Psoas muscle (tissue), 8 donors: ENCODE measurements at regions of chr1 and their contacts with region 1.

Region 1: DNA sequence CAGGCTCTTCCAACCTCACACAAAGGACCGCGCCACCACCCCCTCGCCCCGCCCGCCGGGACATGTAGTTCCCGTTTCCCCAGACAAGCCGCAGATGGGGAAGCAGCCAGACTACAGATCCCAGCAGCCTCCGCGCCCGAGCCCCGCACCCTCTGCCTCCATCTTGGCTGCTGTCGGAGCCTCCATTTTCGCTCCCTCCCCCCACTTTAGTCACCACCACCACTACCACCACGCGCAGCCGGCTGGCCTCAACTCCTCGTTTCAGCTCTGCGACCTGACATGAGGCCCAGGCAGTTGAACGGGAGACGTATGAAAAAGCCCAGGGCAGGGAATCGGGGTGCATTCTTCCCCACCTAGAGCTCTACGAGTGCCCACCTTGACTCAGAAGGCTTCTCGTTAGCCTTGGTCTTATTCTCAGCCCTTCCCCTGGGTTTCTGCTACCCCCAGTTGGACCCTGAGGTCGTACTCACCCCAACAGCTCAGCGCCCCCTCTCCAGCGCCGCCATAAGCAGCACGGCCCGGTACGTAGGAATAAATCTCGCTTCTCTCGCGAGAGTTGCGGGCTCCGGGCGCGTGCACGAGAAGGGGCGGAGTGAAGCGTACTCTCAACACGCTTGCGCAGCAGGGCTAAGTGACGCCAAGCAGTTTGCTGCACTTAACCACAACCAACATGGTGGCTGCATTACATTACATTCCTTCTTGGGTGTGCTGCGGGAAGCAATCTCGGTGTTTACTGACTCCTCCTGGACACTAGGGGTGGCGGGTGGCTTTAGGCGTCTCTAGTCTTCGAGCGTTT is at the start of gene CSDE1:
- DNase-seq: peak; percentile 96 to 99
- ATAC-seq: peak; percentile 85 to 95 (median 91)
- H3K4me3 ChIP-seq: peak within 1 kb of the TSS; percentile 84
- H3K27ac ChIP-seq: peak within 1 kb of the TSS; percentile 100
- H3K4me1 ChIP-seq: peaks cover 25% of the 10 kb centered on the region
- H3K27me3 ChIP-seq: no peaks in the 10 kb centered on the region
- CTCF ChIP-seq: peak; percentile 55
- total RNA-seq, gene CSDE1: 1,331 to 1,888 (median 1,427) TPM

Region 2: DNA sequence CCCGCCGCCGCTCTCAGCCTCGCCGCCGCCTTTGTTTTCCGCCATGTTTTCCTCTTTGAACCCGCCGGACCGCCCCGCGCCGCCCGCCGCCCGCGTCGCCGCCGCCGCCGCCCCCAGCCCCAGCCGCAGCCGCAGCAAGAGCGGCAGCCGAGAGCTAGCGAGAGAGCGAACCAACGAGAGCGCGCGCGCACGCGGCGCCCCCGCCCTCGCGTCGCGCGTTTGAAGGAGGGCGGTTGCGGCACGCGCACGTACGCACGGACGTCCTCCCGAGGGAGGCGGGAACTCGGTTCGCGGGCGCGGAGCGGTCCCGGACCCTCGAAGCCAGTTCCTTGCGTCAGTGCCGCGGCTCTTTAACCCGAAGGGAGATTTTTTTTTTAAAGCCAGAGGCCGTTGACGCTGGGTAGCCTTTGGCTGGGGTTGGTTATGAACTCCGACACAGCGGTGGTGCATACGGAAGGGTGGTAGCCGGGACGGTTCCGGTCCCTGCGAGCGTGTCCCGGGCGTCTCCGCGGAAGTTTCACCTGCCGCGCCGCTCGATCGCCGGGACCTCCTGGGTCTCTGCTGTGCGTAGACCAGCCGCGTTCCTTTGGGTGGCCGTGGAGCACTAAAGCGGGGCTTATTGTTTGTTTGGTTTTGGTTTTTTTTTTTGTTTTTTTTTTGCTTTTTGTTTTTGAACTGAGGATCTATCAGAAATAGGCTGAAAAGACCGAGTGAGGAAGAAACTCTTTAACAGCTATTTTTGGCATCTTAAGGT is 246.4 kb before region 1 on chr1 and contains the start of gene TRIM33:
- intact Hi-C with region 1: loop called in 1 of 2 experiments (anchors 5 kb)
- DNase-seq: peak; percentile 94 to 96
- ATAC-seq: peak; percentile 92 to 96 (median 96)
- H3K4me3 ChIP-seq: peak within 1 kb of the TSS; percentile 93
- H3K27ac ChIP-seq: peak within 1 kb of the TSS; percentile 98
- H3K4me1 ChIP-seq: peaks cover 36% of the 10 kb centered on the region
- H3K27me3 ChIP-seq: no peaks in the 10 kb centered on the region
- CTCF ChIP-seq: no peak
- total RNA-seq, gene TRIM33: 15.2 to 22.0 (median 20.6) TPM

Region 3: GRCh38 chr1:114581335-114582287 is 176.0 kb before region 1 on chr1 and contains the start of gene BCAS2:
- intact Hi-C with region 1: loop called in 1 of 2 experiments (anchors 10 kb)
- DNase-seq: peak; percentile 95 to 96
- ATAC-seq: peak; percentile 95 to 98 (median 98)
- H3K4me3 ChIP-seq: peak within 1 kb of the TSS; percentile 75
- H3K27ac ChIP-seq: peak within 1 kb of the TSS; percentile 92
- H3K4me1 ChIP-seq: peaks cover 8% of the 10 kb centered on the region
- H3K27me3 ChIP-seq: no peaks in the 10 kb centered on the region
- CTCF ChIP-seq: no peak
- total RNA-seq, gene BCAS2: 22.0 to 33.6 (median 27.0) TPM

Region 4: DNA sequence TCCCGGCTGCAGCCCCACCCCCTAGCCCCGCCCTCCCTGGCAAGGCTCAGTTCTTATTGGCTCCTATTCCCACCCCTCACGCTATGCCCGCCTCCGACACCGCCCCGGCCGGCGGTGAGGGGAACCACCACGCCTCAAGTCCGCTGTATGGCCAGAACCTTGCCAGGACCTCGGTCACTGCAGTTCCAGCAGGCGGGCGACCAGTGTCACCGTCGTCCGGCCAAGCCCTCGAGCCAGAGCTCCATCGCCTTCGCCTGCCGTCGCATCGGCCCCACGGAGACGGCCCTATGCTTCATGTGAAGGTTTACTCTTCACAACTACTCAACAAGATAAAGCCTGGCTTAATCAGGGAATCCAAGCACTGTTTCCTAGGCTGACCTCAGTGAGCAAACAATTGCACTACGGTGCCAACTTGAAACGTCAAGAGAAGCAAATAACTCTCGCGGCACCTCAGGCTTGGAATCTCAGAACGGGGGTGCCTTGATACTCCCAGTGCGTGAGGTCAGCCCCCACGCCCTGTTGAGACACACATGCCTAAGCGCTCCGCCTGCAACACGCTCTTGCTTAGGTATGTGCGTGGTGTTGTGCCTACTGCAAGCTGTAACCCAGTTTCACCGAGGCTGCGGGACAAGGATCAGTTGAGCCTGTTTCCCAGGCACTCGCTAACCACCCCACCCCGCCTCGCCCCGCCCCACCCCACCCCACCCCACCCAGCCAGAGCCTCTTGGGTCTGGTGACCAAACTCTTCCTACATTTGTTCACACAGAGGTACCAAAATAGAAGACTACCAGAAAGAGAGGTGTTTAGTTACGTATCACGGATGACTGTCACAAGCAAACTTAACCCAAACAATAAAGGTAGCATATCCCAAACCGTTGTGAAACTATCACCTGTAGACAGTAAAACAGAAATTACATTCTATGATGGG is 87.3 kb before region 1 on chr1:
- intact Hi-C with region 1: loop called in 1 of 2 experiments (anchors 5 kb)
- DNase-seq: peak; percentile 95 to 97
- ATAC-seq: peak; percentile 91 to 96 (median 92)
- H3K4me3 ChIP-seq: peak overlapping the region; percentile 81
- H3K27ac ChIP-seq: peak overlapping the region; percentile 91
- H3K4me1 ChIP-seq: peaks cover 20% of the 10 kb centered on the region
- H3K27me3 ChIP-seq: no peaks in the 10 kb centered on the region
- CTCF ChIP-seq: peak; percentile 18

Region 5: DNA sequence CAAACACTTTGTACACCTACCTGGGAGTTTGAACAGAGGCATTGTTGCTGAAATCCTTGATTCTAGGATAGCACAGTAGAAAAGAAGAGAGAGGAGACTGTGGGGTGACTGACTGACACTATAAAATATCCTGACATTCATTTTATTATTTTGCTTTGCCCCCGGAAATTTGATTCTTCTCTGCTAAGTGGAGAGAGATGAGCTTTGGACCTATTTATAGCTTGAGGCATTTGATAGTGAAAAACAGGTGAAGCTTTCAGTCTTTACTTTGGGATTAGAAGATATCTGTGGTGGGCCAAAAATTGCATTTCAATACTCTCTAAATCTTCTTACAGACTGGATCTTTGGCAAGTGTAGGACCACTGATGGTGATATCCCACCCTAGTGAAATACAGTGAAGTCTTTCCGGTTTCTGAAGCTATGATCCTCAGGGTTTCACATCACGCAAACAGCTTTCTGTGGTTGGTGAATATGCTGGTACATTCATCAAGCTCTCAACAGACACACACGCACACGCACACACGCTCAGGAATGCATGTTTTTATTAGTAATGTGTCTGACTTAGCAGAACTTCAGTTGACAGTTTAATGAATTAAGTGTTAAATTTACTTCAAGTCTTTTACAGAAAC is 62.1 kb before region 1 on chr1 and contains the start of gene AMPD1:
- intact Hi-C with region 1: loop called in 1 of 2 experiments (anchors 2 kb)
- DNase-seq: no peak
- ATAC-seq: peak; percentile 71 to 80 (median 74)
- H3K4me3 ChIP-seq: peak within 1 kb of the TSS; percentile 75
- H3K27ac ChIP-seq: peak within 1 kb of the TSS; percentile 94
- H3K4me1 ChIP-seq: peaks cover 20% of the 10 kb centered on the region
- H3K27me3 ChIP-seq: no peaks in the 10 kb centered on the region
- CTCF ChIP-seq: no peak
- total RNA-seq, gene AMPD1: 73.4 to 289 (median 155) TPM

Region 6: GRCh38 chr1:114868766-114869165 is 111.1 kb after region 1 on chr1:
- intact Hi-C with region 1: no loop called
- DNase-seq: no peak
- ATAC-seq: no peak
- H3K4me3 ChIP-seq: no peak overlapping the region
- H3K27ac ChIP-seq: no peak overlapping the region
- H3K4me1 ChIP-seq: no peaks in the 10 kb centered on the region
- H3K27me3 ChIP-seq: no peaks in the 10 kb centered on the region
- CTCF ChIP-seq: no peak